SK-N-SH (cell line): ENCODE measurements at regions of chr1 and their contacts with region 1.

Region 1: GRCh38 chr1:174262349-174263241 is 103.3 kb downstream of the RABGAP1L start:
- DNase-seq: peak; percentile 62
- H3K4me3 ChIP-seq: no peak overlapping the region; a peak in 1 of 4 replicates
- H3K27ac ChIP-seq: peak overlapping the region; percentile 25 to 67; a peak in 3 of 4 replicates
- H3K4me1 ChIP-seq: peaks cover 5 to 11% of the 10 kb centered on the region in 2 experiments; a peak in 3 of 4 replicates
- H3K27me3 ChIP-seq: no peaks in the 10 kb centered on the region
- CTCF ChIP-seq: peak; percentile 83
- EP300 ChIP-seq: no peak
- RAD21 ChIP-seq: peak; percentile 91

Region 2: GRCh38 chr1:174519844-174520243 is 257.2 kb after region 1 on chr1:
- CTCF ChIA-PET with region 1: interaction called, 11 read pairs
- POLR2A ChIA-PET with region 1: no interaction called
- DNase-seq: peak; percentile 47
- H3K4me3 ChIP-seq: no peak overlapping the region
- H3K27ac ChIP-seq: peak overlapping the region in 1 of 2 experiments; percentile 43; a peak in 1 of 4 replicates
- H3K4me1 ChIP-seq: peaks cover 0 to 10% of the 10 kb centered on the region in 2 experiments; a peak in 2 of 4 replicates
- H3K27me3 ChIP-seq: no peaks in the 10 kb centered on the region
- CTCF ChIP-seq: no peak
- EP300 ChIP-seq: peak in 1 of 2 experiments; percentile 78; a peak in 2 of 4 replicates
- RAD21 ChIP-seq: peak; percentile 36

Region 3: GRCh38 chr1:174726167-174726879 is 463.7 kb after region 1 on chr1:
- CTCF ChIA-PET with region 1: interaction called, 109 read pairs
- POLR2A ChIA-PET with region 1: no interaction called
- DNase-seq: no peak
- H3K4me3 ChIP-seq: no peak overlapping the region
- H3K27ac ChIP-seq: no peak overlapping the region
- H3K4me1 ChIP-seq: no peaks in the 10 kb centered on the region; a peak in 1 of 4 replicates
- H3K27me3 ChIP-seq: no peaks in the 10 kb centered on the region
- CTCF ChIP-seq: peak; percentile 75
- EP300 ChIP-seq: no peak
- RAD21 ChIP-seq: peak; percentile 69

Region 4: GRCh38 chr1:174743654-174744561 is 481.3 kb after region 1 on chr1:
- CTCF ChIA-PET with region 1: interaction called, 117 read pairs
- POLR2A ChIA-PET with region 1: no interaction called
- DNase-seq: peak; percentile 31
- H3K4me3 ChIP-seq: no peak overlapping the region; a peak in 1 of 4 replicates
- H3K27ac ChIP-seq: no peak overlapping the region
- H3K4me1 ChIP-seq: peaks cover 0 to 3% of the 10 kb centered on the region in 2 experiments; a peak in 2 of 4 replicates
- H3K27me3 ChIP-seq: no peaks in the 10 kb centered on the region
- CTCF ChIP-seq: peak; percentile 83
- EP300 ChIP-seq: no peak
- RAD21 ChIP-seq: peak; percentile 85